ENCODE measurements at regions of chr13 and their contacts with region 1.

Region 1: DNA sequence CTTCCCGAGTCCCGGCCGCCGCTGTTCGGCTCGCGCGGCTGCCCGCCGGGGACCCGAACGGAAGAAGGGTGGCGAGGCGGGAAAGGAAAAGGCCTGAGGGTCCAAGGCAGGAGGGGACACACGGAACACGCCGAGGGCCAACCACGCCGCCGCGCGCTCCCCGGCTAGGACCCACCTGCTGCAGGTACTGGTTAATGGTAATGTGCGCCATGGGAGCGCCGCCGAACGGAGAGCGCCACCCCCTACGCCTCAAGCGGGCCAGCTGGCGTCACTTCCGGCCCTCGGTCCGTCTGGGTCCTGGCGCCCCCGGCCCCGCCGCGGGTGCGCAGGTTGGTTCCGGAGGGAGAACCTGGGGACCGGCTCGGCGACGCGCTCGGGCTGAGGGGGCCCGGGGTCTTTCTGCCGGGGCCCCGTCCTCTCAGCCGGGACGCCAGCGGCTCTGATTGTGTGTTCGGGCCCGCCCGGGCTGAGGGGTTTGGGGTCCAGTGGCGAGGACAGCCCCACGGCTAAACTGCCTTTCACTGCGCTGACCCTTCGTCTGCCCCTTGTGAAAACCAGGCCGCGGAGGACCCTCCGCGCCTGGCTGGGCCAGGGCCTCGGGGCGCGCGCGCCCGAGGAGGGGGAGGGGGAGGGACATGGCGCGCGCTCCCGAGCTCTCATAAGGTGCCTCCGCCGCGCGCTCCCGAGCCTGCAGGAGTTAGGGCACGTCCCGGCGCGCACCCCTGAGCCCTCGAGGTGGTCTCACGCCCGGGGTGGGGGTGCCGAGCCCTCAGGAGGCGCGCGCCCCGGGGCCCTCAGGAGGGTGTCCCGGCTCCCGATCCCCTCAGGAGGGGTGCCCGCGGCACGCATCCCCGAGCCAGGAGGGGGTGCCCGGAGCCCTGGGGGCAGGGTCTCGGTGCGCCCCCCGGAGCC is at the start of gene PCID2:
- DNase-seq: peak; percentile 95
- ATAC-seq: peak; percentile 78
- H3K4me3 Mint-ChIP-seq: peak within 1 kb of the TSS; percentile 83
- H3K27ac Mint-ChIP-seq: peak within 1 kb of the TSS; percentile 82
- H3K4me1 Mint-ChIP-seq: peaks cover 52% of the 10 kb centered on the region
- H3K27me3 Mint-ChIP-seq: no peaks in the 10 kb centered on the region
- CTCF ChIP-seq: no peak
- total RNA-seq, gene PCID2: 75.8 to 79.0 TPM

Region 2: GRCh38 chr13:113296842-113297369 is 88.2 kb after region 1 on chr13 and contains the start of gene LAMP1:
- CTCF ChIA-PET with region 1: no interaction called
- POLR2A ChIA-PET with region 1: interaction called, 16 read pairs
- intact Hi-C with region 1: no loop called
- DNase-seq: peak; percentile 96
- ATAC-seq: peak; percentile 81
- H3K4me3 Mint-ChIP-seq: peak within 1 kb of the TSS; percentile 91
- H3K27ac Mint-ChIP-seq: peak within 1 kb of the TSS; percentile 99
- H3K4me1 Mint-ChIP-seq: peaks cover 28% of the 10 kb centered on the region
- H3K27me3 Mint-ChIP-seq: peaks cover 10% of the 10 kb centered on the region
- CTCF ChIP-seq: no peak
- total RNA-seq, gene LAMP1: 37.0 to 42.6 TPM